ENCODE measurements at regions of chr11 and their contacts with region 1.

Region 1: GRCh38 chr11:85854557-85855340 is 434 bp upstream of the CCDC83 start:
- DNase-seq: peak; percentile 95
- H3K4me3 Mint-ChIP-seq: peak overlapping the region; percentile 86
- H3K27ac Mint-ChIP-seq: peak overlapping the region; percentile 89
- H3K4me1 Mint-ChIP-seq: peaks cover 15% of the 10 kb centered on the region
- H3K27me3 Mint-ChIP-seq: no peaks in the 10 kb centered on the region

Region 2: GRCh38 chr11:85664615-85665481 is 189.9 kb before region 1 on chr11 and contains the start of gene CREBZF:
- CTCF ChIA-PET with region 1: interaction called, 15 read pairs
- POLR2A ChIA-PET with region 1: interaction called, 20 read pairs
- DNase-seq: peak; percentile 96
- H3K4me3 Mint-ChIP-seq: peak within 1 kb of the TSS; percentile 97
- H3K27ac Mint-ChIP-seq: peak within 1 kb of the TSS; percentile 94
- H3K4me1 Mint-ChIP-seq: peaks cover 28% of the 10 kb centered on the region
- H3K27me3 Mint-ChIP-seq: no peaks in the 10 kb centered on the region
- total RNA-seq, gene CREBZF: 66.0 to 68.4 TPM

Region 3: DNA sequence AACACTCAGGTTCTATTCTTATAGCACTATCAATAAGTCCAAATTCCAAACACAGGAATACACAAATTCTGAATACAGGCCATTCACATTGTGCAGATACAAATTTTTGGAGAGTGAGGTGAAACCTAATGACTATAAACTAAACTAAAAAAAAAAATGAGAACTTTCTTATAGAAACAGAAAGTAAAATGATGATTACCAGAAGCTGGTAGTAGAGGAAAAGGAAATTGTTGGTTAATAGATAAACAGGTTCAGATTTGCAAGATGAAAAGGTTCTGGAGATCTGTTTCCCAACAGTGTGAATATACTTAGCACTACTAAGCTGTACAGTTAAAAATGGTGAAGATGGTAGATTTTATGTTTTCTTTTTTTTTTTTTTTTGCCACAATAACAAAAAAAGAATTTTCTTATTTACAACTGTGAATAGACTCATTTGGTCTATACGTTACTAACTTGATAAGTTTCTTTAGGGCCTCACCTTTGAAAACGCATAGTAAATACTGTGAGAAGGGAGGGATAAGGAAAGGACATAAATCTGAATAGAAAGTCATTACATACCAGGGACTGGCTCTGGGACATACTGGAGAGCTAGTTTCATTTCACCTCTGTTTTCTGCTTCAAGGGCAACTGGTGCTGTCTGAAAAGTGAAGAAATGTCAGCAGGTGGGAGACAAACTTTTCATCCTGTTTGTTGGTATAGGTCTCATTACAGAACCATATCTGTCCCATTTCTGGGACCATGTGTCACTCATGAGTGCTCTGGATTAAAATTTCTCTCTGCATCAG is 154.6 kb before region 1 on chr11:
- CTCF ChIA-PET with region 1: interaction called, 14 read pairs
- POLR2A ChIA-PET with region 1: interaction called, 12 read pairs
- DNase-seq: no peak
- H3K4me3 Mint-ChIP-seq: peak overlapping the region; percentile 38
- H3K27ac Mint-ChIP-seq: peak overlapping the region; percentile 78
- H3K4me1 Mint-ChIP-seq: peaks cover 49% of the 10 kb centered on the region
- H3K27me3 Mint-ChIP-seq: no peaks in the 10 kb centered on the region

Region 4: DNA sequence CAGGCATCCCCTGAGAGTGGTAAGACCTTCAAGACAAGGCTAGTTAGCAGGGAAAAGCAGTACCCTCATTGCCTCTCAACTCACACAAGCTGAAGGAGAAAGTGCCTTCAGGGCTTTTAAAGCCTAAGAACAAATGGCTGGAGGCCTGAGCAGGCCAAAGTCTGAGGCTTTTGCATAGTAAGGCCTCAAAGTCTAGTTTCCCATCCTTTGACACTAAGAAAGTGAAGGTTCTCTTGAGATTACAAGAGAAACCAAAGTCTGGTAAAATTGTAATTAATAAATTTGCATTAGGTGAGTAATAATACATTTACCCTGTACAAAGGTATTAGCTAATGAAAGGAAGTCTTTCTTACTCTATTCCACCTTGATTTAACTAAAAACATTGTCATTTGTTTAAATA is 121.8 kb before region 1 on chr11:
- CTCF ChIA-PET with region 1: no interaction called
- POLR2A ChIA-PET with region 1: no interaction called
- DNase-seq: no peak
- H3K4me3 Mint-ChIP-seq: no peak overlapping the region
- H3K27ac Mint-ChIP-seq: no peak overlapping the region
- H3K4me1 Mint-ChIP-seq: peaks cover 12% of the 10 kb centered on the region
- H3K27me3 Mint-ChIP-seq: no peaks in the 10 kb centered on the region

Region 5: GRCh38 chr11:85810871-85811611 is 43.7 kb before region 1 on chr11 and contains the start of gene SYTL2:
- CTCF ChIA-PET with region 1: interaction called, 6 read pairs
- POLR2A ChIA-PET with region 1: interaction called, 10 read pairs
- DNase-seq: peak; percentile 83
- H3K4me3 Mint-ChIP-seq: peak within 1 kb of the TSS; percentile 86
- H3K27ac Mint-ChIP-seq: peak within 1 kb of the TSS; percentile 47
- H3K4me1 Mint-ChIP-seq: peaks cover 46% of the 10 kb centered on the region
- H3K27me3 Mint-ChIP-seq: peaks cover 7% of the 10 kb centered on the region
- total RNA-seq, gene SYTL2: 93.0 to 99.2 TPM

Region 6: GRCh38 chr11:85835263-85835662 is 19.5 kb before region 1 on chr11:
- CTCF ChIA-PET with region 1: interaction called, 10 read pairs
- POLR2A ChIA-PET with region 1: no interaction called
- DNase-seq: no peak
- H3K4me3 Mint-ChIP-seq: no peak overlapping the region
- H3K27ac Mint-ChIP-seq: no peak overlapping the region
- H3K4me1 Mint-ChIP-seq: no peaks in the 10 kb centered on the region
- H3K27me3 Mint-ChIP-seq: peaks cover 2% of the 10 kb centered on the region

Region 7: GRCh38 chr11:86291466-86292262 is 436.9 kb after region 1 on chr11:
- CTCF ChIA-PET with region 1: interaction called, 17 read pairs
- POLR2A ChIA-PET with region 1: interaction called, 10 read pairs
- DNase-seq: peak; percentile 65
- H3K4me3 Mint-ChIP-seq: no peak overlapping the region
- H3K27ac Mint-ChIP-seq: peak overlapping the region; percentile 74
- H3K4me1 Mint-ChIP-seq: peaks cover 59% of the 10 kb centered on the region
- H3K27me3 Mint-ChIP-seq: no peaks in the 10 kb centered on the region